ENCODE measurements at regions of chr6 and their contacts with region 1.

Region 1: DNA sequence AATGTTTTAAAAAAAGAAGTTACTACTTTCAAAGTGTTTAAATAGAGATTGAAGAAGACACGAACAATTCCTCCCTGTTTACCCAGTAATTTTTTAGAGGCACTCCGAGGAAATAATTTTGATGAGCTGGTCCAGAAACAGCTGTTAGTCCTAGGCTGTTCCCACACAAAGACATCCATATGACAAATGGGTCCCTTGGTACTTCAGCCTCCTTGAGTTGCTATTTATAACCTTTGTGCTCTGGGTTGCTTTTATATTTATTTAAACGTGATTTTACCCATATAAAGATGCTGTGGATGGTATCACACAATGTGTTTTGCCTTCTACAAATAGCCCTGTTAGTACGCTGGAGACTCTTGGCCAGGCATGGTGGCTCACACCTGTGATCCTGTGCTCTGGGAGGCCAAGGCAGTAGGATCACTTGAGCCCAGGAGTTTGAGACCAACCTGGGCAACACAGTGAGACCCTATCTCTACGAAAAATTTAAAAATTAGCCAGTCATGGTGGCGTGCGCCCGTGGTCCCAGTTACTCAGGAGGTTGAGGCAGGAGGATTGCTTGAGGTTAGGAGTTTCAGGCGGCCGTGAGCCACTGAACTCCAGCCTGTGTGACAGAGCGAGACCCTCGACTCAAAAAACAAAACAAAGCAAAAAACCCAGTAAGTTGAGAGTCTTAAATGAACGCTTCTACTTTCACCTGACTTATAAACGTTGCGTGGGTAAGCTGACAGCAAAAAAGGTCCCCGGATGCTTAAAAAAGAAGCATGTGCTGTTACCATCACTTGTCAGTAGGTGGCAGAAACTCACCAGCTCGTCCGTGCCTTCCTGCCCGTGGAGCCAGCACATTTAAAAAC is 56.9 kb upstream of the ARMH2 start:
- DNase-seq: peak in 2 of 3 donors; percentile 31 to 79
- ATAC-seq: peak; percentile 79
- H3K4me3 ChIP-seq: no peak overlapping the region
- H3K4me1 ChIP-seq: peaks cover 9% of the 10 kb centered on the region
- CTCF ChIP-seq: peak; percentile 85

Region 2: GRCh38 chr6:24451581-24452388 is 403.8 kb before region 1 on chr6:
- intact Hi-C with region 1: no loop called
- DNase-seq: no peak
- ATAC-seq: peak; percentile 18
- H3K4me3 ChIP-seq: no peak overlapping the region
- H3K4me1 ChIP-seq: no peaks in the 10 kb centered on the region
- CTCF ChIP-seq: no peak

Region 3: DNA sequence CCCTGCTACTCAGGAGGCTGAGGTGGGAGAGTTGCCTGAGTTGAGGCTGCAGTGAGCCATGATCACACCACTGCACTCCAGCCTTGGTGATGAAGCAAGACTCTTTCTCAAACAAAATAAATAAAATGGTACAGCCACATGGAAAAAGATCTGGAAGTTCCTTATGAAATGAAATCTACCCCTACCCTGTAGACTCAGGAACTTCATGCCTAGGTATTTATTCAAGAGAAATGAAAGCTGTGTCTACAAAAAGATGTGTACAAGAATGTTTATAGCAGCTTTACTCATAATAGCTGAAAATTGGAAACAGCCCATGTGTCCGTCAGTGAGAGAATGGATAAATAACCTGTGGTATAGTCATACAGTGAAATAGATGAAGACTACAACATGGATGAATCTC is 121.5 kb before region 1 on chr6:
- intact Hi-C with region 1: no loop called
- DNase-seq: no peak
- ATAC-seq: no peak
- H3K4me3 ChIP-seq: no peak overlapping the region
- H3K4me1 ChIP-seq: no peaks in the 10 kb centered on the region
- CTCF ChIP-seq: no peak

Region 4: DNA sequence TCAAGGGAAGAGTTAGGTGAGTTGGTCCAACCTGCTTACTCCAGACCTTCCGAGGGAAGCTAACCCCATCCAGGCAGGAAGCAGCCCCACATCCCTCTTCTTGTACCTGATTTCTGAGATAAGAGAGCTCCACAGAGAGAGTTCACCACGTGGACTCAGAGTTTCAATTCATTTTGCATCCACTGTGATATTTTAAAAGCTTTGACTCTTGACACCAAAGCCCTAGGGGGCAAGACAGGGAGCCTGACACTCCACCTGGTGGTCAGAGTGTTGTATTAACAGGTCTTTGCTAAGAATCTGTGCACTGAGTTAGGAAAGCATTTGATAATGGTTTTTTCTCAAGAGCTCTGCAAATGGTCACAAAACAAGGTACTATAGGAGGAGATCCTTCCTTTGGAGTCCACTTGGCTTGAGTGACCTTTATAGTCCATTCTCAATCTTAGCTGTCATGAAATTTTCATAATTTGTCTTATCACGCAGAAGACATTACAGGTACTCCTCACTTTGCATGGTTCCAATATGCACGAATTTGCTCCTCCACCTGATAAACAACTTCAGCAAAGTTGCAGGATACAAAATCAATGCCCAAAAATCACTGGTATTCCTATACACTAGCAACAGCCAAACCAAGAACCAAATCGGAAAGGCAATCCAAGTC is 136.3 kb after region 1 on chr6:
- intact Hi-C with region 1: loop called in 1 of 2 experiments (anchors 5 kb)
- DNase-seq: peak in 2 of 3 donors; percentile 38 to 58
- ATAC-seq: peak; percentile 92
- H3K4me3 ChIP-seq: no peak overlapping the region
- H3K4me1 ChIP-seq: no peaks in the 10 kb centered on the region
- CTCF ChIP-seq: peak; percentile 32

Region 5: GRCh38 chr6:25070547-25071366 is 215.1 kb after region 1 on chr6:
- intact Hi-C with region 1: loop called (anchors 5 kb)
- DNase-seq: peak; percentile 63 to 86 (median 70)
- ATAC-seq: peak; percentile 98
- H3K4me3 ChIP-seq: no peak overlapping the region
- H3K4me1 ChIP-seq: no peaks in the 10 kb centered on the region
- CTCF ChIP-seq: peak; percentile 76

Measured in mucosa of descending colon (tissue), 3 donors.